ENCODE measurements at regions of chr15 and their contacts with region 1.

Region 1: GRCh38 chr15:48059791-48060190 is 61.0 kb upstream of the SLC24A5 start:
- DNase-seq: peak; percentile 79

Region 2: DNA sequence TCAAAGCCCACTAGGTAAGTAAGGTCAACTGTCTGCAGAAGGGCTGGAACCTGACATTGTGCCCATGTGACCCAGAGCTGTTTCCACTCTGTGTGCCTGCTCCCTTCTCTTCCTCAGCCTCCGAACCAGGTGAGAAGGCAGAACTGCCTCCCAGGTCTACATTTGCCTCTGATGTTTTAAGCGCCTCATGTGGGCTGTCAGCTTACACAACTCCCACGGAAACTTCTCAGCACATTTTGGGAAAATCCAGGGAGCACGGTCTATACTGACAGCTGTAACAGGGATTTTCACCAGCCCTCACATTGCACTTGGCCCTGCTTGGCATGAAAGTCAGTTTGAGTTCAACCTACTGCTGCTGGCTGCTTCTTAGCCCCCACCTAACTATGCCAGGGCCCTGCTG is 14.1 kb after region 1 on chr15:
- intact Hi-C with region 1: loop called in 1 of 2 experiments (anchors 1 kb)
- DNase-seq: no peak

Measured in posterior vena cava (tissue), 2 donors.